Astrocyte of the cerebellum (primary cell): ENCODE measurements at regions of chr5 and their contacts with region 1.

Region 1: GRCh38 chr5:38193015-38193581 is 65.3 kb upstream of the EGFLAM start:
- DNase-seq: peak; percentile 34
- H3K4me3 ChIP-seq: no peak overlapping the region
- CTCF ChIP-seq: peak; percentile 84

Region 2: GRCh38 chr5:36915653-36916052 is 1277.4 kb before region 1 on chr5:
- in situ Hi-C with region 1: no loop called
- DNase-seq: no peak
- H3K4me3 ChIP-seq: no peak overlapping the region
- CTCF ChIP-seq: no peak

Region 3: DNA sequence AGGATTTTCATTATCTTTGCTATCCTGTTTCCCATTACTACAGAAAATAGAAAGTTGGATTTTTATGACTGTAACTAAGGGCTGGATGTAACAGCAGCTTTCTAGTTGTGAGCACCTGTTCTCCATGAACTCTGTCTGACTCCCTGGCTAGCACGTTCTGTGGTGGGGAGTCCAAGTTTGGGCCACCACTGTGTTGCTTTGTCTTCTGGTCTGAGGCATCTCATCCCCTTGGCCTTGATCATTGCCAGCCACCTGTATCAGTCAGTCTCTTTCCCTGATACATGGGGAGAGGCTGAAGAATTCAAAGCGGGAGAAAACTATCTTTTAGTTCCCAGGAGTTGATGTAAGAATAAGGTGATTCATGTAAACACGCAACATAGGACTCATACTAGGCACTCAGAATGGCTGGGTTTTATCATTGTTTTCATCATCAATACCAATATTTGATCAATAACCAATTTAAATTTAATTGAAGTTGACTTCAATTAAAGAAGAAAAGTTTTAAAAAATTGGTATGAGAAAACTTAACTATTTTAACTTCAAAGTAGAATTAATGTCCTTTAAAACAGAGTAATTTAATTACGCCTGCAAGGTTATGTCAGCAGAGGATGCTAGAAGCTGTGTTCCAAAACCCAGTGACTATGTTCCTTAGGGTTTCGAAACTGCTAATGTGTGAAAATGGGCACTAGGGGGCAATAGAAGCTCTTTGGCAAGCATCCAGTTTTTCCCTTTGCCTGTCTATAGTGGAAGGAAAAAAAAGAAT is 780.4 kb before region 1 on chr5:
- in situ Hi-C with region 1: loop called (anchors 25 kb)
- DNase-seq: peak; percentile 82
- H3K4me3 ChIP-seq: no peak overlapping the region
- CTCF ChIP-seq: peak; percentile 99

Region 4: DNA sequence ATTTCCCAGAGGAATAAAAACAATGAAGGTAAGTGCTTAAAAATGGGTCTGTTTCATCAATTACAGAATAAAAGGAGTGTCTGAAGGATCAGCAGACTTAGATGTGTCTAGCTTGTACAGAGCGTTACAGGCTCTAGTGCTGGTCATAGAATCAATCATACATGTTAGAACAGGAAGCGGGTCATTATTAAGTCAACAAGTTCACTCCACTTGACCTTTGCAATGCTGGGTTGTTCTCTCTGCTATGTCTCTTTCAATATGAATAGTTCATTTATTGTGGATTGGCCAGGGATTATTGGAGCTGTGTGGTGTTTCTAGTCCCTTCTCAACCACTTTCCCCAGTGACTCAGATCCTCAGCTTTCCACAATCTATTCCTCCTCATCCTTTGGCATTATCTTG is 44.6 kb after region 1 on chr5:
- in situ Hi-C with region 1: no loop called
- DNase-seq: no peak
- H3K4me3 ChIP-seq: no peak overlapping the region
- CTCF ChIP-seq: no peak

Region 5: GRCh38 chr5:38273624-38274023 is 80.5 kb after region 1 on chr5:
- in situ Hi-C with region 1: no loop called
- DNase-seq: no peak
- H3K4me3 ChIP-seq: no peak overlapping the region
- CTCF ChIP-seq: no peak

Region 6: DNA sequence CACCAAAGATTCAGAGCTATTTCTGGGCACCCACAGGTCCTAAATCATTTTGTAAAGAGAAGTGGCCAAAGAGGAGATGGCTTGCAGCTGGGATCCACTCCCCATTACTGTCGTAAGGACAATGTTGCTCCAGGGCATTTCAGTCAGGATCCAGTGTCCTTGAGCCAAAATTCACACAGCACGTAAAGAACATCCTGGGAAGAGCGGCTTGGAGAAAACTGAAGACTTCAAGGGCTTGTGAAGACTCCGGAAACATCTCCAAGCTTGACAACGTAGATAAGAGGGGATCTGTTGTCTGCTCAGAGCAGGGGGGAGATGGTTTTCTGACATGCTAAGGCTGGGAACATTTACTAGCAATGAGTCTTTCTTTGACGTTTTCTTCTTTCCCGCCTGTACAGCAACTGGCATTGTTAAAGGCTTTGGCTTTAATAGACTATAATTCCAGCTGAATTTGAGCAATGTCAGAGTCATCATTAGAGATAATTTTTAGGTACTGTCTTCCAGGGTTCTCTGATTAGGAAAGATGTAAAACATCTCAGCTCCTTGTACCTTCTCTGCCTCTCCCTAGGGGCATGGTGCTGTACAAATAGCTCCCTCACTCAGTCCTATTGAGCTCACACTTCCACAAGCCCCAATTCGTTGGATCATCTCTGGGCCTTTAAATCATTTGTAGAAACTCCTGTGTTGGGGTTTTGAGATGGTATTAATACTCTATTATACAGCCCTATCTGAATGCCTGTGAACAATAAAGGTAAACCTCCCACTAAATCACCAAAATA is 104.9 kb after region 1 on chr5:
- in situ Hi-C with region 1: no loop called
- DNase-seq: no peak
- H3K4me3 ChIP-seq: no peak overlapping the region
- CTCF ChIP-seq: no peak